ENCODE measurements at regions of chr1 and their contacts with region 1.

Region 1: DNA sequence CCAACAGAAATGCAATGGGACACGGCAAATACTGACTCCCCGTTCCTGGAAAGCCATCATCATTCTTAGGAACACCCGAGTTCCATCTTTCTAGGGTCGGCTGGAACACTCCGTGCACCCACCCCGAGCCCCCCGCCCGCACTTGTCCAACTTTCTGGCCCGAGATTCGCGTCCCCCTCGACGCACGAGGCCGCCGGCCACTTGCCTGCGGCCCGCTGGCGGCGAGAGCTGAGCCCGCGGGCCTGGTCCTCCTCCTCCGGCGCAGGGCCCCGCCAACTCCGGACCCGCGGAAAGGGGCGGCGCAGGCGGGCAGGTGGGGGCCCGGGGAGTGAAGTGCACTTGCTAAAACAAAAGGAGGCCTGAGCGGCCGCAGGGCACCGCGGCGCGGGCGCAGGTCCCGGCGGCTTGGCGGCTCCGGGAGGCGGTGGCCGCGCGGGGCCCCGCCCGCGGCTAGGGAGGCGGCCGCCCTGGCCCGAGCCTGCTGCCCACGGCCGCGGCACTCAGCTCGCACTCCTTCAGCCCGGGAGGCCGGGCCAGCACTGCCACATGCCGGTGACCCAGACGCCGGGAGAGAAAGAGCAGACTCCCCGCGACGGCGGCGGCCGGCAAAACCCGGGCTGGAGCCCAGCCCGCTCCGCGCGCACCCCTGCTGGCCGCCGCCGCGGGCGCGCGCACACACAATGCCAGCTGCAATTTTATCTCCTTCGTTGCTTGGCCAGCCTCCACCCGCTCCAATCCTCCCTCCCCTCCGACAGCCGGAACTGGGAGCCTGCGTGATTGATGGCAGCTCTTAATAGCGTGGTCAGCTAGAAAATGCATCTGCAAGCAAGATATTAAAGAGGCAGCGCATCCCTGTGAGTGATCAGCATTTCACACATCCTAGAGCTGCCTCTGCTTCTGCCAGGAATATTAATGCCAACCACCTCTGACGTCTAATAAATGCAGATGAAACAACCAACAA is 114.3 kb downstream of the RERE start:
- DNase-seq: peak; percentile 78
- ATAC-seq: peak; percentile 79
- H3K4me3 Mint-ChIP-seq: peak overlapping the region; percentile 89
- H3K27ac Mint-ChIP-seq: peak overlapping the region; percentile 83
- H3K4me1 Mint-ChIP-seq: peaks cover 56% of the 10 kb centered on the region
- H3K27me3 Mint-ChIP-seq: no peaks in the 10 kb centered on the region
- CTCF ChIP-seq: no peak

Region 2: GRCh38 chr1:8643542-8644536 is 59.3 kb before region 1 on chr1:
- CTCF ChIA-PET with region 1: no interaction called
- POLR2A ChIA-PET with region 1: interaction called, 3 read pairs
- intact Hi-C with region 1: loop called (anchors 5 kb)
- DNase-seq: peak; percentile 49
- ATAC-seq: peak; percentile 98
- H3K4me3 Mint-ChIP-seq: peak overlapping the region; percentile 28
- H3K27ac Mint-ChIP-seq: peak overlapping the region; percentile 85
- H3K4me1 Mint-ChIP-seq: peaks cover 60% of the 10 kb centered on the region
- H3K27me3 Mint-ChIP-seq: no peaks in the 10 kb centered on the region
- CTCF ChIP-seq: no peak

Region 3: GRCh38 chr1:8660411-8660828 is 42.7 kb before region 1 on chr1:
- CTCF ChIA-PET with region 1: no interaction called
- POLR2A ChIA-PET with region 1: interaction called, 5 read pairs
- intact Hi-C with region 1: loop called (anchors 5 kb)
- DNase-seq: no peak
- ATAC-seq: peak; percentile 38
- H3K4me3 Mint-ChIP-seq: no peak overlapping the region
- H3K27ac Mint-ChIP-seq: no peak overlapping the region
- H3K4me1 Mint-ChIP-seq: peaks cover 27% of the 10 kb centered on the region
- H3K27me3 Mint-ChIP-seq: no peaks in the 10 kb centered on the region
- CTCF ChIP-seq: no peak

Region 4: DNA sequence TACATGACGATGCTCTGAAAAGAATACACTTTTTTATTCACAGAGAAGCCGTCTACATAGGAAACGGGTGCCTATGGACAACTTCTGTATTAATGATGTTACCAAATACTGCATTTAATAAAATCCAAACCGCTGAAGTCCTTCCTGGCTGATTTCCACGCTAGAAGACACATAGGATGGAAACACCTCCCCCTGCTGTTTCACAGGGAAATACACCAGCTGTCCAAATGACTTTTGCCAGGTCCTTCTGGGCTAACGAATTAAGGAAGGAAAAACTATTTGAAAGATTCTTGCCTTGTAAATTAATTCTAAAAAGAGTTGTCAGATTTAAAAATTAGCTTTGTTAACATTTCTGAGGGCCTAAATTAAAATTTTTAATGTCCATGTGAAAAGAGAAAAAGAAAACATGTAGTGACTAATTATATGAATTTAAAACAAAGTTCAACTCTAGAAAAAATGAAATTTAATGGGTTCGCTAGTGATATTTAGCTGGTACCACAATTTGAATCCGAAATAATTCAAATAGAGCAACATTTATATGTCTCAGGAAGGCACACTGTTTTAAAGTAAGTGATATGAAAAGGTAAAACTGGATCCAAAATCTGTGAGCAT is 31.7 kb before region 1 on chr1:
- CTCF ChIA-PET with region 1: interaction called, 15 read pairs
- POLR2A ChIA-PET with region 1: interaction called, 6 read pairs
- intact Hi-C with region 1: no loop called
- DNase-seq: no peak
- ATAC-seq: peak; percentile 49
- H3K4me3 Mint-ChIP-seq: peak overlapping the region; percentile 12
- H3K27ac Mint-ChIP-seq: no peak overlapping the region
- H3K4me1 Mint-ChIP-seq: peaks cover 52% of the 10 kb centered on the region
- H3K27me3 Mint-ChIP-seq: no peaks in the 10 kb centered on the region
- CTCF ChIP-seq: no peak

Region 5: DNA sequence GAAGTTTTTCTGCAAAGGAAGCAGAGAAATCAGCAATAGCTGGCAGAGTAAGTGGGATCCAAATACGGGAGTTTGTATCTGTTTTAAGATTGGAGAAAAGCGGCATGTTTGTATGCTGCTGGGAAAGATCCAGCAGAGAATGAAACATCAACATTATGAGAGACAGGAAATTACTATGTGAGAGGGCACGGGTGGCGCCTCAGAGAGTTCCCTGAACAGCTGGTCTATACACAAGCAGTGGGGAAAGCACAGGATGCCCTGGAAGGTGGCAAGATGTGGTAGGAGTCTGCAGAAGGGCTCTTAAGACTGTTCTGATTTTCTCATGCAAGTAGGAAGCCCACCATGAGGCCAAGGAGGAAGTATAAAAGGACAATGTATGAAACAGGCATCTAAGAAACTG is 16.1 kb before region 1 on chr1:
- CTCF ChIA-PET with region 1: interaction called, 3 read pairs
- POLR2A ChIA-PET with region 1: interaction called, 4 read pairs
- intact Hi-C with region 1: loop called (anchors 2 kb)
- DNase-seq: no peak
- ATAC-seq: no peak
- H3K4me3 Mint-ChIP-seq: peak overlapping the region; percentile 16
- H3K27ac Mint-ChIP-seq: peak overlapping the region; percentile 50
- H3K4me1 Mint-ChIP-seq: peaks cover 69% of the 10 kb centered on the region
- H3K27me3 Mint-ChIP-seq: no peaks in the 10 kb centered on the region
- CTCF ChIP-seq: no peak

Region 6: DNA sequence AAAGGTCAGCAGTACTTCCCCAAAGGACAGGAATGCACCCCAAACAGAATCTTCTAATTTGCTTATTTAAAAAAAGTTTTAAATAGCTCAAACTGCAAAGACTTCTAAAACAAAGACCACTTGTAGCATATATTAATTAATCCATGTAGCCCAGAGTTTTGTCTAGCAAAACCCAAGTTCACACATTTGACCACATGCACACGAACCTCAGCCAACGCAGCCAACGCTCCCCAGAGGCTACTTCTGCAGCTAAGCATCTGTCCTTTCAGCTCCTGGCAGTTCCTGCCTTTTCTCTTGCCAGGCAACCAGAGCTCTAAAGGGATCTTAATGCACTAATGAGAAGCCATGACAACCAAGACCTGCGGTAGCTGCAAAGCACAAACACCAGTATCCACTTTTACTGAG is 24.7 kb after region 1 on chr1:
- CTCF ChIA-PET with region 1: interaction called, 12 read pairs
- POLR2A ChIA-PET with region 1: interaction called, 3 read pairs
- intact Hi-C with region 1: no loop called
- DNase-seq: no peak
- ATAC-seq: no peak
- H3K4me3 Mint-ChIP-seq: no peak overlapping the region
- H3K27ac Mint-ChIP-seq: no peak overlapping the region
- H3K4me1 Mint-ChIP-seq: peaks cover 18% of the 10 kb centered on the region
- H3K27me3 Mint-ChIP-seq: no peaks in the 10 kb centered on the region
- CTCF ChIP-seq: no peak

Region 7: GRCh38 chr1:8817406-8818324 is 114.5 kb after region 1 on chr1 and contains the start of gene RERE:
- CTCF ChIA-PET with region 1: no interaction called
- POLR2A ChIA-PET with region 1: interaction called, 5 read pairs
- intact Hi-C with region 1: loop called (anchors 5 kb)
- DNase-seq: peak; percentile 99
- ATAC-seq: peak; percentile 93
- H3K4me3 Mint-ChIP-seq: peak within 1 kb of the TSS; percentile 94
- H3K27ac Mint-ChIP-seq: peak within 1 kb of the TSS; percentile 96
- H3K4me1 Mint-ChIP-seq: peaks cover 42% of the 10 kb centered on the region
- H3K27me3 Mint-ChIP-seq: no peaks in the 10 kb centered on the region
- CTCF ChIP-seq: no peak
- total RNA-seq, gene RERE: 90.5 and 98.8 TPM in 2 replicates

Measured in activated B cell treated with CpG ODN at 0.5 μM for 24 hours (primary cell).